A549 (cell line): ENCODE measurements at regions of chr9 and their contacts with region 1.

Region 1: DNA sequence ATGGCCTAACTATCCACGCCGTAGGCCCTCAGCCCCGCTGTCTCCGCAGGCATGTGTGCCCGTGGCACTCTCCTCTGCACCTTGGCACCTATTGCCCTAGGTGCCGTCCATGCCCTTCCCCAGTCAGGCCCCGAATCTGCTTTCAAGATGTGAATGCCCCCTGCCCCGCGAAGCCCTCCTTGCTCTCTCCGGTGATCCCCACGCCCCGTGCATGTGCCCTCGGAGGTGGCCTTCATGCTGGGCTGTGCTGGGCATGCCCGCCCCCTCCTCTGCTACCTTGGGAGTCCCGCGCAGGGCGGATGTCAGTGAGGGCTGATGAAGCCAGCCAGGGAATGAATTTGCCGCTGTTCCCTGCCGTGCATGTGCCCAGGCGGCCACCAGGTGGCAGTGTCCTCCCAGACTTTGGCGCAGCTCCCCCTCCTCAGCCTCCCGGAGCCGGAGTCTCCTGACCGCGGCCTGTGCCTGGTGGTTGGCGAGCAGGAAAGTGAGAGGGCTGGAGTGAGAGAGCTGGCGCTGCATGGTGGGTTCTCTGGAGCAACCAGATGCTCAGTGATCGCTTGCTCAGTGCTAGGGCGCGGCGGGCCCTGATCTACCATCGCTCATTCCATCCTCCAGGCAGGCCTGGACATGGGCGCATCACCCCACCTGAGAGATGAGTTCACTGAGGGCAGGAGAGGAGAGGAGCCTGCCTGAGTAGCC is 112.9 kb upstream of the LMX1B start:
- DNase-seq: peak; percentile 76
- ATAC-seq: peak; percentile 66 to 86
- H3K4me3 ChIP-seq: no peak overlapping the region
- H3K27ac ChIP-seq: no peak overlapping the region
- H3K4me1 ChIP-seq: peaks cover 12% of the 10 kb centered on the region
- CTCF ChIP-seq: peak; percentile 80
- EP300 ChIP-seq: no peak
- POLR2A ChIP-seq: no peak
- RAD21 ChIP-seq: peak; percentile 87

Region 2: DNA sequence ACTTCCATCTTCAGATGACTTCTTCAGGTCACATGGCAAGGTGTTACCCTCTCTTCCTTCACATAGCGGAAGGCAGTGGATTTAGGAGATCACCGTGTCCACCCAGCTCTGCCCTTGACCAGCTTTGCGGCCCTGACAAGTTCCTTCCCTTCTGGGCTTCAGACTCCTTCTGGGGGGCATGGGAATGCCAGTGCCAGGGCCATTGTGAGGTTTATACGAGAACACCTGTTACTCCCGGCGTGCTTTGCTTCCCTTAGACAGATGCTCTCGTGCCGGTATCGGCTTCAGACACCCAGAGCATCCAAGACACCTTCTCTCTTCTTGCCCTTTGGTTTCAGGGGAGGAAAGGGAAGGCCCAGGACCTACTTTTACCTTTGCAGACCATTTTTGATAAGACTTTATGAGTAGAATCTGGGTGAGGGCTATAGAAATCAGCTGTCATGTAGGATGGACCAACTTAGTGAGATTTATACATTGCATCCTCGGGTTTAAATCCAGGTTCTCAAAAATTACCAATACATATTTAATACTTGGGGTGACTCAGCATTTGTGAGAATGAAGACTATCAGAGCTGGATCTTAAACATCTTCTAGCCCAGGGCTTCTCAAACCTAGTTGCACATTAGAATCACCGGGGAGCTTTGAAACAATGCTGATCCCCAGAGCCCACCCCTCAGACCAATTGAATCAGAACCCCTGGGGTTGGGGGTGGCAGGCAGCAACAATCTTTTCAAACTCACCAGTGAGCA is 36.0 kb before region 1 on chr9:
- CTCF ChIA-PET with region 1: interaction called, 12 read pairs
- POLR2A ChIA-PET with region 1: no interaction called
- DNase-seq: no peak
- ATAC-seq: no peak
- H3K4me3 ChIP-seq: no peak overlapping the region
- H3K27ac ChIP-seq: peak overlapping the region in 1 of 2 experiments; percentile 60; a peak in 2 of 6 replicates
- H3K4me1 ChIP-seq: peaks cover 7% of the 10 kb centered on the region; the same call in 2 of the 3 replicates
- CTCF ChIP-seq: no peak
- EP300 ChIP-seq: no peak
- POLR2A ChIP-seq: no peak
- RAD21 ChIP-seq: no peak

Region 3: DNA sequence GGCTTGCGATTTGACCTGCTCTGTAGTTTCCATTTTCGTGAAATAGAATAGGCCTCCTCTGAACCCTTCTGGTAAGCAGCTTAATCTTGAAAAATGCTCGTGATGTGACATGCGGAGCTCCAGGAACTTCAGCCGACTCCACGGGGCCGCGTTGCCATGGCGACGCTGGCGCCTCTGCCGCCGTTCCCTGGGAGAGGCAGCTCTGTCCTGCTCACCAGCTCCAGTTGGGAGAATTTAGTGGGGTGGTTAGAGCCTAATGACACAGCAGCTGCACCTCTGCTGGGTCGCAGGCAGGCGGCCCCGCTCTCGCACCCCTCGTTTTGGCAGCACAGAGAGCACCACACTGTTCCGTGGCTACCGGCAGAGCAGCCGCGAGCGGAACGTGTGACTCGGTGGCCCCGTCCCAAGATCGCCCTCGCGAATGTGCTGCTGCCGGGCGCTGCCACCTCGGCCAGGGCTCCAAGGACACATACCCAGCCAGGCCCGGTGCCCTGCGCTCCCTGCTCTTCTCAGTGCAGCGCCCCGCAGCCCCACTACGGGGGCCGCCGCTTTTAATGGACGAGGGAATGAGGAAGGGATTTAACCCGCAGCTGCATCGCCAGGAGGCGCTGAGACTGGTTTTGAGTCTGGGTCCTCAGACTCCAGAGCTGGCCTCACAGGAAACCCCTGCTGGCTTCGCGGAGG is 18.3 kb before region 1 on chr9:
- CTCF ChIA-PET with region 1: interaction called, 79 read pairs
- POLR2A ChIA-PET with region 1: interaction called, 3 read pairs
- DNase-seq: no peak
- ATAC-seq: no peak
- H3K4me3 ChIP-seq: no peak overlapping the region
- H3K27ac ChIP-seq: no peak overlapping the region
- H3K4me1 ChIP-seq: no peaks in the 10 kb centered on the region
- CTCF ChIP-seq: no peak
- EP300 ChIP-seq: no peak
- POLR2A ChIP-seq: no peak
- RAD21 ChIP-seq: no peak

Region 4: DNA sequence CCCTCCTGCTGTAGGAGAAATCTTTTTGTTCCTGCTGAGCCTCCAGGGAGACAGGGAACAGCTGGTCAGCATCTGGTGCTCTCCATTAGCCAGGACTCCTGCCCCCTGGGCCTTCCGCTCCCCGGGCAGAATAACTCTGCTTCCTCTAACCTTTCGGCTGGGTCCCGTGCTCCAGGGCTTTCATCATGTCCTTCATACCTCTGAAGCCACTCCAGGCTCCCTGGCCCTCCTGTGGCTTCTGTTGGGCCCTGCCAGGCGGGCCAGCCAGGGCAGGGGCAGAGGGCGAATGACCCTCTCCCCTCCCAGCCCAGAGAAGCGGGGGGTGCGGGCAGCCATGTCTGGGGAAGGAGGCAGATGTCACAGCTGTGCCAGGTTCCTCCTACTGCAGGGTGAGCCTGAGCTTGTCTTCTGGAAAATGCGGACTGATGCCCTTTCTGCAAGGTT is 31.2 kb after region 1 on chr9:
- CTCF ChIA-PET with region 1: interaction called, 30 read pairs
- POLR2A ChIA-PET with region 1: no interaction called
- DNase-seq: no peak
- ATAC-seq: no peak; a peak in 1 of 6 replicates
- H3K4me3 ChIP-seq: no peak overlapping the region
- H3K27ac ChIP-seq: no peak overlapping the region
- H3K4me1 ChIP-seq: no peaks in the 10 kb centered on the region
- CTCF ChIP-seq: no peak
- EP300 ChIP-seq: no peak
- POLR2A ChIP-seq: no peak
- RAD21 ChIP-seq: no peak

Region 5: DNA sequence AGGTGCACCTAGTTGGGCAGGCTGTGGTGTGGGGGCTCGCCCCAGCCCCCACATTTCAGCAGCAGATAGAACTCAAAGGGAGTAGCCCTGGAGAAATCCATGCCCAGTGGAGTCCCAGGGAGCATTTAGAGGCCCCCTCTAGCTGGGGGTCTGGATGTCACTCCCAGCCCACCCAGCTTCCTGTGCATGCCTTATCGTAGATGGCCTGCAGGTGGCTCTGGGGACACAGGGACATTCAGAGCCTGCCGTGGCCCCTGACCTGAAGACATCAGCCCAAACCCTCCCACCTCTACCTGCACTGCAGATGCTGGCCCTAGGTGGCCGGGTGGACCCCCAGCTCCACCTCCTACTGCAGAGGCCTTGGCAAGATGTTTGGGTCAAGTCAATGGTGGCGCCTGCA is 63.9 kb after region 1 on chr9:
- CTCF ChIA-PET with region 1: interaction called, 59 read pairs
- POLR2A ChIA-PET with region 1: no interaction called
- DNase-seq: no peak
- ATAC-seq: peak in 1 of 2 experiments; percentile 64; a peak in 3 of 6 replicates
- H3K4me3 ChIP-seq: no peak overlapping the region
- H3K27ac ChIP-seq: no peak overlapping the region
- H3K4me1 ChIP-seq: no peaks in the 10 kb centered on the region
- CTCF ChIP-seq: 0 out of 3 replicates have a peak, but pooled peaks have one; percentile 10
- EP300 ChIP-seq: no peak
- POLR2A ChIP-seq: no peak
- RAD21 ChIP-seq: no peak